BJ (cell line): ENCODE measurements at regions of chr6 and their contacts with region 1.

Region 1: DNA sequence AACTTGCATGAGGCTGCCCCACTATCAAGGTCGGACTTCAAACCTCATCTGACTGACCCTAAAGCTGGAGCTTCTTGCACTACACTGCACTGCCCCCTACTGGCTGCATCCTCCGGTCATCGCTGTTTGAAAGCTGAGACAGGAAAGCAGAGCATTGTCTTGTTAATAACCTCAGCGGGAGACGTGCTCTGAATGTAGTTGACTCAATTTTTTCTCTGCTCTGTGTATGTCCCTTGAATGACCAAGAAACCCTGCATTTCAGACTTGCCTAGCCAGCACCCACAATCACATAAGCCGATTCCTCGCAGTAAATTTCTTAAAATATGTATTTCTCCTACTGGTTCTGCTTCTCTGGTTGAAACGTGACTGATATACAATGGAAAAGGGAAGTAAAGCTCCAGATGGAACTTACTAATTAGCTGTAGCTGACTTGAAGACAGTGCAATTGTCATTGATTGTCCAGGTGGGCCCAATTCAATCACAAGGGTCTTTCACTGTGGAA is 27.8 kb downstream of the TCF21 start:
- DNase-seq: peak; percentile 31
- H3K4me3 ChIP-seq: no peak overlapping the region
- H3K27me3 ChIP-seq: no peaks in the 10 kb centered on the region
- CTCF ChIP-seq: peak; percentile 93

Region 2: GRCh38 chr6:133568970-133569889 is 347.5 kb before region 1 on chr6:
- CTCF ChIA-PET with region 1: interaction called, 138 read pairs
- POLR2A ChIA-PET with region 1: interaction called, 3 read pairs
- DNase-seq: peak; percentile 28
- H3K4me3 ChIP-seq: peak overlapping the region; percentile 29
- H3K27me3 ChIP-seq: no peaks in the 10 kb centered on the region
- CTCF ChIP-seq: peak; percentile 97

Region 3: GRCh38 chr6:133898263-133898662 is 18.4 kb before region 1 on chr6:
- CTCF ChIA-PET with region 1: interaction called, 14 read pairs
- POLR2A ChIA-PET with region 1: no interaction called
- DNase-seq: no peak
- H3K4me3 ChIP-seq: no peak overlapping the region
- H3K27me3 ChIP-seq: peaks cover 41% of the 10 kb centered on the region
- CTCF ChIP-seq: no peak

Region 4: GRCh38 chr6:133906050-133906449 is 10.7 kb before region 1 on chr6:
- CTCF ChIA-PET with region 1: interaction called, 24 read pairs
- POLR2A ChIA-PET with region 1: no interaction called
- DNase-seq: no peak
- H3K4me3 ChIP-seq: no peak overlapping the region
- H3K27me3 ChIP-seq: peaks cover 12% of the 10 kb centered on the region; the same call in 1 of the 2 replicates
- CTCF ChIP-seq: no peak

Region 5: GRCh38 chr6:134145786-134146185 is 229.1 kb after region 1 on chr6:
- CTCF ChIA-PET with region 1: no interaction called
- POLR2A ChIA-PET with region 1: no interaction called
- DNase-seq: peak; percentile 51
- H3K4me3 ChIP-seq: no peak overlapping the region
- H3K27me3 ChIP-seq: no peaks in the 10 kb centered on the region
- CTCF ChIP-seq: no peak

Region 6: GRCh38 chr6:134169871-134170486 is 253.3 kb after region 1 on chr6:
- CTCF ChIA-PET with region 1: no interaction called
- POLR2A ChIA-PET with region 1: no interaction called
- DNase-seq: no peak
- H3K4me3 ChIP-seq: peak overlapping the region; percentile 7
- H3K27me3 ChIP-seq: no peaks in the 10 kb centered on the region
- CTCF ChIP-seq: no peak